ENCODE measurements at regions of chr6 and their contacts with region 1.

Region 1: DNA sequence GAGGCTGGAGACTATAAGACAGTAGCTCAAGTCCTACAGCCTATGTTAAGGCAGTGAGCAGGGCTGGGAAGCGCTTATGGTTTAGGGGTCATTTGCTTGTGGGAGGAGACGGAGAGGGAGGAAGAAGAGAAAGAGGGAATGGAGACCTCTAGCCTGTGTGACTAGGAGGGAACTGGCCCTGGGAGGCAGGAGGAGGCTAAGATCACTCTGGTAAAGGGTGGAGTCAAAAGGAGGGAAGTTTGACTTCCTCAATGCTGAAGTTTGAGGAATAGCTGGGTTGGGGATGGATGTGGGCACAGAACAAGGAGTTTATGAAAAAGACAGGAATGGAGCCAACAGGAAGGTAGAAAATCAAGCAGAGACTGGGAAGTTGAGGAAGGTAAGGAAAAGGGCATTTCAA is 6.4 kb upstream of the BACH2 start:
- DNase-seq: no peak
- ATAC-seq: no peak
- H3K4me3 ChIP-seq: no peak overlapping the region
- H3K4me3 Mint-ChIP-seq: peak overlapping the region in 1 of 3 donors; percentile 19
- H3K27ac ChIP-seq: no peak overlapping the region
- H3K27ac Mint-ChIP-seq: no peak overlapping the region
- H3K4me1 ChIP-seq: peaks cover 0 to 2% of the 10 kb centered on the region in 2 experiments
- H3K4me1 Mint-ChIP-seq: peaks cover 13 to 22% (median 18%) of the 10 kb centered on the region in 3 donors
- H3K27me3 ChIP-seq: peaks cover 0 to 2% of the 10 kb centered on the region in 2 experiments
- H3K27me3 Mint-ChIP-seq: peaks cover 0 to 8% of the 10 kb centered on the region in 2 donors

Region 2: GRCh38 chr6:90212274-90212673 is 90.8 kb before region 1 on chr6:
- CTCF ChIA-PET with region 1: no interaction called
- POLR2A ChIA-PET with region 1: interaction called in 1 of 2 experiments, 10 read pairs
- DNase-seq: peak in 17 of 35 experiments; percentile 24 to 55 (median 35)
- ATAC-seq: peak; percentile 32 to 53 (median 43)
- H3K4me3 ChIP-seq: no peak overlapping the region
- H3K4me3 Mint-ChIP-seq: peak overlapping the region in 1 of 3 donors; percentile 15
- H3K27ac ChIP-seq: no peak overlapping the region
- H3K27ac Mint-ChIP-seq: peak overlapping the region in 1 of 2 donors; percentile 75
- H3K4me1 ChIP-seq: peaks cover 42 to 77% of the 10 kb centered on the region in 2 experiments
- H3K4me1 Mint-ChIP-seq: peaks cover 61 to 67% (median 65%) of the 10 kb centered on the region in 3 donors
- H3K27me3 ChIP-seq: no peaks in the 10 kb centered on the region
- H3K27me3 Mint-ChIP-seq: no peaks in the 10 kb centered on the region

Measured in T-cell (primary cell).